Caco-2 (cell line): ENCODE measurements at regions of chr3 and their contacts with region 1.

Region 1: GRCh38 chr3:184099806-184100686 is 3.2 kb downstream of the HTR3E start:
- DNase-seq: no peak
- H3K4me3 ChIP-seq: no peak overlapping the region
- H3K4me3 Mint-ChIP-seq: no peak overlapping the region
- H3K27ac Mint-ChIP-seq: no peak overlapping the region
- H3K4me1 ChIP-seq: no peaks in the 10 kb centered on the region
- H3K4me1 Mint-ChIP-seq: no peaks in the 10 kb centered on the region
- H3K27me3 ChIP-seq: no peaks in the 10 kb centered on the region
- H3K27me3 Mint-ChIP-seq: peaks cover 3% of the 10 kb centered on the region
- CTCF ChIP-seq: no peak

Region 2: GRCh38 chr3:184129012-184129411 is 29.0 kb after region 1 on chr3:
- CTCF ChIA-PET with region 1: no interaction called
- POLR2A ChIA-PET with region 1: interaction called, 12 read pairs
- intact Hi-C with region 1: no loop called
- DNase-seq: peak; percentile 59 to 62
- H3K4me3 ChIP-seq: no peak overlapping the region
- H3K4me3 Mint-ChIP-seq: no peak overlapping the region
- H3K27ac Mint-ChIP-seq: no peak overlapping the region
- H3K4me1 ChIP-seq: no peaks in the 10 kb centered on the region
- H3K4me1 Mint-ChIP-seq: no peaks in the 10 kb centered on the region
- H3K27me3 ChIP-seq: no peaks in the 10 kb centered on the region
- H3K27me3 Mint-ChIP-seq: no peaks in the 10 kb centered on the region
- CTCF ChIP-seq: peak; percentile 38 to 41